Activated CD4-positive, alpha-beta memory T cell treated with anti-CD3 and anti-CD28 coated beads for 36 hours (primary cell): ENCODE measurements at regions of chr6 and their contacts with region 1.

Region 1: DNA sequence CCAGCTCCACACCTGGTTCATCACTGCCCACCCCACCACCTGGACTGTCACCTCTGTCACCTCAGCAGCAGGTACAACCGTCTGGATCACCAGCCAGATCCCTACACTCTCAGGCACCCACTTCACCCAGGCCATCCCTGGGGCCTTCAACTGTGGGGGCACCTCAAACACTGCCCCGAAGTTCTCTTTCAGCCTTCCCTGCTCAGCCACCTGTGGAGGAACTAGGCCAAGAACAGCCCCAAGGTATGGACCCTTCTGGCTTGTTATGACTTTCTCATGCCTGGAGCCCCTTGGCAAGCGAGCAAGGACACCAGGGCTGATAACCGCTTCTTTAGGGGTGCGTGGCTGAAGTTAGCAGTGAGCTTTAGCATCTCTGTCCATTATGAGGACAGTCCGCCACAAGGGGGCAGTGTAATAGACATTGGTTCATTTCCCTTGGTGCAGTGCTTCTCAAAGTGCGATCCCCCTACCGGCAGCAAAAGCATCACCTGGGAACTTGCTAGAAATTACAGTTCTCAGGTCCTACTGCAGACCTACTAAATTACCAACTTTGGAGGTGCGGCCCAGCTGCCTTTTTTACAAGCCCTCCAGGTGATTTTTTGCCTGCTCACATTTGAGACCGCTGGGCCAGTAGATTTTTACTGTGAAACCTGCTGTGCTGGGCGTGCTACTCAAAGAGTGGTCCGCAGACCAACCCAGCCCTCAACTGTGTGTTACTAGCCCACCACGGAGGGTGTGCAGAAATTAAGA is 32.5 kb downstream of the PNPLA1 start:
- DNase-seq: peak; percentile 94
- H3K4me3 Mint-ChIP-seq: no peak overlapping the region
- H3K27ac Mint-ChIP-seq: no peak overlapping the region
- H3K4me1 Mint-ChIP-seq: peaks cover 4% of the 10 kb centered on the region
- H3K27me3 Mint-ChIP-seq: peaks cover 14% of the 10 kb centered on the region

Region 2: GRCh38 chr6:36123257-36124139 is 178.9 kb before region 1 on chr6:
- CTCF ChIA-PET with region 1: interaction called, 7 read pairs
- POLR2A ChIA-PET with region 1: no interaction called
- intact Hi-C with region 1: loop called (anchors 10 kb)
- DNase-seq: peak; percentile 96
- H3K4me3 Mint-ChIP-seq: no peak overlapping the region
- H3K27ac Mint-ChIP-seq: peak overlapping the region; percentile 59
- H3K4me1 Mint-ChIP-seq: peaks cover 78% of the 10 kb centered on the region
- H3K27me3 Mint-ChIP-seq: no peaks in the 10 kb centered on the region

Region 3: GRCh38 chr6:36290661-36291620 is 11.5 kb before region 1 on chr6:
- CTCF ChIA-PET with region 1: interaction called, 33 read pairs
- POLR2A ChIA-PET with region 1: no interaction called
- intact Hi-C with region 1: no loop called
- DNase-seq: no peak
- H3K4me3 Mint-ChIP-seq: no peak overlapping the region
- H3K27ac Mint-ChIP-seq: no peak overlapping the region
- H3K4me1 Mint-ChIP-seq: peaks cover 8% of the 10 kb centered on the region
- H3K27me3 Mint-ChIP-seq: peaks cover 5% of the 10 kb centered on the region

Region 4: GRCh38 chr6:36319436-36319762 is 17.0 kb after region 1 on chr6:
- CTCF ChIA-PET with region 1: interaction called, 20 read pairs
- POLR2A ChIA-PET with region 1: no interaction called
- intact Hi-C with region 1: no loop called
- DNase-seq: no peak
- H3K4me3 Mint-ChIP-seq: no peak overlapping the region
- H3K27ac Mint-ChIP-seq: no peak overlapping the region
- H3K4me1 Mint-ChIP-seq: no peaks in the 10 kb centered on the region
- H3K27me3 Mint-ChIP-seq: no peaks in the 10 kb centered on the region

Region 5: DNA sequence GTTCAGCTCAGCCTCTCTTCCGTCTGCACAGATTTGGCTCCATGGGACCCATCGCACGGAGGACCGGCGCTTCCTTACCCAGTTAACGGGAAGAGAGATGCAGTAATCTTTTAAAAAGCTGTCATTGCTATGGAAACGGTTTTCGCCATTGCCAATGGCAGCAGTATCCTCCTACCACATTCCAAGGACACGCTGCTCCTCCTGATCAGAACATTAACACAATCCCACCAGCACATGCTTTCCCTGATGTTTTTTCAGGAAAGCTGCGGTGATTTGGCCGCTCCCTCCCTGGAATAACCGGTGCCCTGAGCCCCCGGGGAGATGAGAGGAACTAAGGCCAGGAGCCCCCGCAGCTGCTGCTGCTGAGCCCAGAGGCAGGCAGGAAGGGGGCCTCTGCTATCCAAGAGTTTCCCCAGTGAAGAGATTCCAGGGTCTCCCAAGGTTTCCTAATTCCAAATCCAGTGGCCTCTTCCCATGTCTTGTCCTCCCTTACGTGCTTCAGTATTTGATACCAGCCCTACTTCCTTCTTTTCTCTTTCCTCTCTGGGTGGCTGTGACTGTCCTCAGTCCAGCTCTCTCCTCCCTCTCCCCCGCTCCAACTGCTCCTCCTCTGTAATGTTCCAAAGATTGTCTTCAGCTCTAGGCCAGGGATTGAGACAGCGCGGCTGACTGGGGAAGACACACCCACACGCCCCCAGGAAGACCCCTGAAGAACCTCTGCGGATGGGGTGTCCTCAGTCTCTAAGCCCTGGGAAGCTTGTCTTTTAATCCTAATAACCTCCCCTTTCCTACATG is 31.7 kb after region 1 on chr6:
- CTCF ChIA-PET with region 1: interaction called, 13 read pairs
- POLR2A ChIA-PET with region 1: no interaction called
- intact Hi-C with region 1: no loop called
- DNase-seq: no peak
- H3K4me3 Mint-ChIP-seq: no peak overlapping the region
- H3K27ac Mint-ChIP-seq: no peak overlapping the region
- H3K4me1 Mint-ChIP-seq: peaks cover 11% of the 10 kb centered on the region
- H3K27me3 Mint-ChIP-seq: peaks cover 26% of the 10 kb centered on the region

Region 6: DNA sequence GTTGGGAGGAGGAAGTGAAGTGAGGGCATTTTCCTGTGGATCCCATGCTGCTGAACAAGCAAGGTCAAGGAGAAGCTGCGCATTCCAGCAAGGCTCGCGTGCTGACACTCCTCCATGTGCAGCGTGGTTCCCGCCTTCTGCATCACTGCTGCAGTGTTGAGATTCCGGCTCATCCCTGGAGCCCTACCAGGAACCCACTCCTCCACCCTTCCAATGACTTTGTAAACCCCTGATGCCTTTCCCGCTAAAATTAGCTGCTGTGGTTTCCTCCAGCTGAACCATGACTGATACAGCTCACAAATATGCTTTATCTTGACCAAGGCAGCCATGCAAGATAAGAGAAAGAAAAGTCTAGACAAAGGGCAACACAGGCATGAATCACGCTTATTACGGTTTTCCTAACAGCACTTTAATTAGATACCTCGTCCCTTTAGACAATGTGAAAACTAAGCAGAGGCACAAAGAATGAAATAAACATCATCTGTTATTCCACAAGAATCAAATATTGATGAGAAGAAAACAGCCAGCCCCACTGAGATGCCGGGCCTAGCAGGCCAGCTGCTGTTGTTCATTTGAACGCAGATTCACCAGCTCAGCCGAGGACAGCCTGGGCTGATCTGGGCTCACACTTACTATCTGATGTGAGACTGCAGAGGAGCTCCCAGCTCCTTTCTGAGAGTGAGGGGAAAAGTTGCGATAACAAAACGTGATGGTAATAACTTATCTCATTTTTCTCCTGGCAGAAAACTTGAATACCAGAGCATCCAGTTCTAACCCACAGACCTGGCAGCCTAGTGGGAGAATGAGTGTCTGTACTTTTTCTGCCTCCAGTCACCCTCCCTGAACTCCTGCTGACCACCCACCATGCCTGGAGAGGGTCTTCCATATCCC is 48.5 kb after region 1 on chr6:
- CTCF ChIA-PET with region 1: interaction called, 160 read pairs
- POLR2A ChIA-PET with region 1: no interaction called
- intact Hi-C with region 1: no loop called
- DNase-seq: no peak
- H3K4me3 Mint-ChIP-seq: no peak overlapping the region
- H3K27ac Mint-ChIP-seq: no peak overlapping the region
- H3K4me1 Mint-ChIP-seq: peaks cover 15% of the 10 kb centered on the region
- H3K27me3 Mint-ChIP-seq: peaks cover 13% of the 10 kb centered on the region